Activated CD8-positive, alpha-beta memory T cell treated with anti-CD3 and anti-CD28 coated beads, Interleukin-2, amount 10 ng/mL, durations not matched to agents 7 days and 5 days (primary cell): ENCODE measurements at regions of chr7 and their contacts with region 1.

Region 1: GRCh38 chr7:22082886-22083703 is 137.4 kb upstream of the CDCA7L start:
- DNase-seq: peak; percentile 87
- ATAC-seq: peak; percentile 98
- H3K4me3 Mint-ChIP-seq: peak overlapping the region; percentile 79
- H3K27ac Mint-ChIP-seq: peak overlapping the region; percentile 70
- H3K4me1 Mint-ChIP-seq: peaks cover 17% of the 10 kb centered on the region
- H3K27me3 Mint-ChIP-seq: peaks cover 59% of the 10 kb centered on the region

Region 2: GRCh38 chr7:21253740-21254687 is 829.1 kb before region 1 on chr7:
- CTCF ChIA-PET with region 1: interaction called, 12 read pairs
- DNase-seq: peak; percentile 65
- ATAC-seq: peak; percentile 80
- H3K4me3 Mint-ChIP-seq: peak overlapping the region; percentile 39
- H3K27ac Mint-ChIP-seq: no peak overlapping the region
- H3K4me1 Mint-ChIP-seq: peaks cover 15% of the 10 kb centered on the region
- H3K27me3 Mint-ChIP-seq: peaks cover 64% of the 10 kb centered on the region

Region 3: DNA sequence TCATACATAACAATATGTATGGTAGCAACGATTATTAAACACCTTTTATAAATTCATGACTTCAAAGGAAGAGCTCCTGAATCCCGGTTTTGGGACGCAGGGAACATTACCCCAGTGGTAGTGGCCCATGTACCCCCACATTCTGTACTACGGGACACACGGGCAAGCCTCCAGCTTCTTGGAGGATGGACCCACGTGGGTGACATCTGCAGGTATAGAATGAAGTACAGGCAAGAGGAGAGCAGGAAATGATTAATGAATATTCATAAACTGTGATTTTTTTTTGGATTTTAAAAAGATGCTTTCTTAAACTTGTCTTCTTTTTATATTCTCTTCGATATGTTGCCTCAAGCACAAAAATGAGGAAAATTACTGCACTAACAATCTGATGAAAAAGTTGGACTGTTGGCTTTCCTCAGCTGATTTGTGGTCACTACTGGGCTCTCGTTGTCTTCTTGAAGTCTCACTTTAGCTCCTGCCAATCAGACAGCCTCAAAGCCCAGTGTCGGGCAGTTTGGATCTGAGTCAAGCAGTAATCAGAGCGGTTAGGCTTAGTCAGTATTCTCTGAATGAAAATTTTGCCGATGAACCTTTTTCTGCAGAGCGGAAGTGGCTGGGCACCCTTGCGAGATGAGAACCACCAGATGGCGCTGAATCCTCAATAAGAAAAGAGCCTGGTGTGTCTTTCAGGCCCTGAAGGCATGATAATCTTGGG is 20.3 kb after region 1 on chr7:
- CTCF ChIA-PET with region 1: interaction called, 18 read pairs
- DNase-seq: peak; percentile 91
- ATAC-seq: peak; percentile 99
- H3K4me3 Mint-ChIP-seq: peak overlapping the region; percentile 29
- H3K27ac Mint-ChIP-seq: peak overlapping the region; percentile 64
- H3K4me1 Mint-ChIP-seq: peaks cover 9% of the 10 kb centered on the region
- H3K27me3 Mint-ChIP-seq: peaks cover 27% of the 10 kb centered on the region